GM12878 (cell line): ENCODE measurements at regions of chr3 and their contacts with region 1.

Region 1: GRCh38 chr3:170414202-170414663 is 4.4 kb upstream of the CLDN11 start:
- DNase-seq: peak; percentile 13
- ATAC-seq: peak; percentile 83
- H3K4me3 ChIP-seq: no peak overlapping the region
- H3K27ac ChIP-seq: no peak overlapping the region
- H3K4me1 ChIP-seq: no peaks in the 10 kb centered on the region
- H3K27me3 ChIP-seq: peaks cover 5% of the 10 kb centered on the region in 2 experiments; a peak in 3 of 4 replicates
- CTCF ChIP-seq: peak; percentile 93 to 99 (median 98)
- EP300 ChIP-seq: no peak
- POLR2A ChIP-seq: no peak
- RAD21 ChIP-seq: peak; percentile 100

Region 2: DNA sequence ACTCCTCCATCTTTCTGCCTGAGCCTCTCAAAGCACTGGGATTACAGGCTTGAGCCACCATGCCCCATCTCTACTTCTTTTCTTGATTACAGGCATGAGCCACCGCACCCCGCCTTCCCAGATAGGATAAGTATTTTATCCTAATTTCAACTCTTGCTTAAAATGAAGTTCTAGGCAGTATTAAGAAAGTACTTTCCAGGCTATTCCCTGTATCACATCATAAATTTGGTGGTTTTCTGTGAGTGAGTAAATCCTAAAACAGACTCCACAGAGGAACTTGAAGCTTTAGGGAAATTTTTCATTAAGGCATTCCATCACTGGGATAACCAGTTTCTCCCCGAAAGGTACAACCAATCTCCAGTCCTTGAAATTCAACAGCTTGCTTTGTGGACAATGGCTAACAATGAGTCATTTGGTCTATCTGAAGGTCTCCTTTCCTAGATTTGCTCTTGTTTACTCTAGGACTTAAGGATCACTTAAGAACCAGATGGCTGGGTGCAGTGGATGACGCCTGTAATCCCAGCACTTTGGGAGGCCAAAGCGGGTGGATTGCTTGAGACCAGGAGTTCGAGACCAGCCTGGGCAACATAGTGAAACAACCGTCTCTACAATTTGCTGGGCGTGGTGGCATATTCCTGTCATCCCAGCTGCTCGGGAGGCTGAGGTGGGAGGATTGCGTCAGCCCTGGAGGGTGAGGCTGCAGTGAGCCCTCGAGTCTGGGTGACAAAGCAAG is 106.4 kb before region 1 on chr3:
- CTCF ChIA-PET with region 1: interaction called, 113 read pairs
- POLR2A ChIA-PET with region 1: no interaction called
- RAD21 ChIA-PET with region 1: interaction called, 34 read pairs
- SMC1A ChIA-PET with region 1: interaction called, 68 read pairs
- in situ Hi-C with region 1: loop called (anchors 5 kb)
- intact Hi-C with region 1: loop called (anchors 1 kb)
- DNase-seq: no peak
- ATAC-seq: no peak
- H3K4me3 ChIP-seq: no peak overlapping the region
- H3K27ac ChIP-seq: no peak overlapping the region
- H3K4me1 ChIP-seq: no peaks in the 10 kb centered on the region
- H3K27me3 ChIP-seq: no peaks in the 10 kb centered on the region
- CTCF ChIP-seq: no peak
- EP300 ChIP-seq: no peak
- POLR2A ChIP-seq: no peak
- RAD21 ChIP-seq: no peak

Region 3: DNA sequence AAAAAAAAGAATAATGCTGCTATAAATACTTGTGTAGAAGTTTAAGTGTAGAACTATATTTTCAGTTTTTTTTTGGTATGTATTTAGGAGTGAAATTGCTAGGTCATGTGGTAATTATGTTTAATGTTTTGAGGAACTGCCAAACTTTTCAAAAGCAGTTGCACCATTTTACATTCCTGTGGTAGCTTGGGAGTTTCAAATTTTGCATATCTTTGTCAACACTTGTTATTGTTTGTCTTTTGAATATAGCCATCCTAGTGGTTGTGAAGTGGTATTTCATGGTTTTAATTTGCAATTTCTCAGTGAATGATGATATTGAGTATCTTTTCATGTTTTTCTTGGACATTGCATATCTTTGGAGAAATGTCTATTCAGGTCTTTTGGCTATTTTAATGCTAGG is 26.3 kb before region 1 on chr3:
- CTCF ChIA-PET with region 1: interaction called, 18 read pairs
- POLR2A ChIA-PET with region 1: no interaction called
- RAD21 ChIA-PET with region 1: interaction called, 4 read pairs
- SMC1A ChIA-PET with region 1: interaction called, 5 read pairs
- in situ Hi-C with region 1: no loop called
- intact Hi-C with region 1: no loop called
- DNase-seq: no peak
- ATAC-seq: no peak
- H3K4me3 ChIP-seq: no peak overlapping the region
- H3K27ac ChIP-seq: no peak overlapping the region
- H3K4me1 ChIP-seq: no peaks in the 10 kb centered on the region
- H3K27me3 ChIP-seq: no peaks in the 10 kb centered on the region
- CTCF ChIP-seq: 0 out of 6 replicates have a peak, but pooled peaks of 1 of the 3 experiments have one; percentile 6
- EP300 ChIP-seq: no peak
- POLR2A ChIP-seq: no peak
- RAD21 ChIP-seq: no peak

Region 4: DNA sequence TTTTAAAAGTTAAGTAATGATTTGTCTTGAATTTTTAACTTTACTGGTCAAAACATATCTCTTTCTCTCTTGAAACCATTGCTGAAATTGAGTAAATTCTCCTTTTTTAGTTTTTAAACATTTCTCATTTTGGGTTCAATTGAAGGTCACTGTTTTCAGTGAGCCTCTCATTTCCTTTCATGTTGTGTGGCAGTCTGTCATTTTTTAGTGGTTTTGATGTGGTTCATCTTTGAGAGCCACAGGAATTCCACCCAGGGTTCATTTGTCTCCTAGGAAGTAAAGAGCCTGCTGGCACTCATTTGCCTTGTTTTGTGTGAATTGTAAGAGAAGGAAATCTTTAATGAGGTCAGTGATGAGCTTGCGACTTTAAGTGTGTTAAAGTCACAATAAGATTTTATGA is 14.8 kb after region 1 on chr3:
- CTCF ChIA-PET with region 1: interaction called, 13 read pairs
- POLR2A ChIA-PET with region 1: no interaction called
- RAD21 ChIA-PET with region 1: no interaction called
- SMC1A ChIA-PET with region 1: interaction called, 8 read pairs
- in situ Hi-C with region 1: no loop called
- intact Hi-C with region 1: no loop called
- DNase-seq: no peak
- ATAC-seq: no peak
- H3K4me3 ChIP-seq: no peak overlapping the region
- H3K27ac ChIP-seq: no peak overlapping the region
- H3K4me1 ChIP-seq: peaks cover 16% of the 10 kb centered on the region
- H3K27me3 ChIP-seq: no peaks in the 10 kb centered on the region; a peak in 3 of 4 replicates
- CTCF ChIP-seq: no peak
- EP300 ChIP-seq: no peak
- POLR2A ChIP-seq: no peak
- RAD21 ChIP-seq: no peak

Region 5: GRCh38 chr3:170689893-170690660 is 275.8 kb after region 1 on chr3:
- CTCF ChIA-PET with region 1: interaction called, 38 read pairs
- POLR2A ChIA-PET with region 1: no interaction called
- RAD21 ChIA-PET with region 1: interaction called, 20 read pairs
- SMC1A ChIA-PET with region 1: interaction called, 21 read pairs
- in situ Hi-C with region 1: no loop called
- intact Hi-C with region 1: loop called (anchors 1 kb)
- DNase-seq: no peak
- ATAC-seq: peak; percentile 81
- H3K4me3 ChIP-seq: no peak overlapping the region
- H3K27ac ChIP-seq: no peak overlapping the region
- H3K4me1 ChIP-seq: no peaks in the 10 kb centered on the region
- H3K27me3 ChIP-seq: no peaks in the 10 kb centered on the region; a peak in 1 of 4 replicates
- CTCF ChIP-seq: peak; percentile 69 to 81 (median 78)
- EP300 ChIP-seq: no peak
- POLR2A ChIP-seq: no peak
- RAD21 ChIP-seq: peak; percentile 86

Region 6: DNA sequence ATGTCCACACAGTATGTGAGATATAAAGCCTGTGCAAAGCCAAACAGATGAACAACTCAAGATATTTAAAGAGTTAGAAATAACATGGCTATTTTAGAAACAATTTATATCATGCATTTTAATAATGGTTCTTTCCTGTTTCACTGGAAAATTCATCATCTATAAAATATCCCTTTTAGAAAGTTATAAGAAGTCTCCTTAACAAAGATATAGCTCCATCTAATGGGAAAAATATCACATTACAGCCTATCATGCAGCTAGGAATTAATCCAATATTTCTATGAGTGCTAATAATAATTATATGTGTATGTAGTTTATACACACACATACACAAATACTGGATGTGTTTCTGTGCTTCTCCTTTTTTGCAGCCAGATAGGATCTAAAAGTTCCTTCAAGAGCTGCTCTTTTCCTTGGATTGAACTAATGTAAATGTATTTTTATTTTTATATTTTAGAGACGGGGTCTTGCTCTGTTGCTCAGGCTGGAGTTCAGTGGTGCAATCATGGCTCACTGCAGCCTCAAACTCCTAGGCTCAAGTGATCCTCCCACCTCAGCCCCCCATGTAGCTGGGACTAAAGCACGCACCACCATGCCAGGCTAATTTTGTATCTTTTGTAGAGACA is 434.2 kb after region 1 on chr3:
- CTCF ChIA-PET with region 1: interaction called, 24 read pairs
- POLR2A ChIA-PET with region 1: no interaction called
- RAD21 ChIA-PET with region 1: interaction called, 8 read pairs
- SMC1A ChIA-PET with region 1: interaction called, 3 read pairs
- in situ Hi-C with region 1: no loop called
- intact Hi-C with region 1: no loop called
- DNase-seq: no peak
- ATAC-seq: no peak
- H3K4me3 ChIP-seq: no peak overlapping the region
- H3K27ac ChIP-seq: no peak overlapping the region
- H3K4me1 ChIP-seq: no peaks in the 10 kb centered on the region
- H3K27me3 ChIP-seq: peaks cover under 1 to 6% of the 10 kb centered on the region in 2 experiments; a peak in 3 of 4 replicates
- CTCF ChIP-seq: peak in 2 of 3 experiments; percentile 9 to 16; a peak in 3 of 6 replicates
- EP300 ChIP-seq: no peak
- POLR2A ChIP-seq: no peak
- RAD21 ChIP-seq: no peak